Breast epithelium (tissue), 4 donors: ENCODE measurements at regions of chr1 and their contacts with region 1.

Region 1: DNA sequence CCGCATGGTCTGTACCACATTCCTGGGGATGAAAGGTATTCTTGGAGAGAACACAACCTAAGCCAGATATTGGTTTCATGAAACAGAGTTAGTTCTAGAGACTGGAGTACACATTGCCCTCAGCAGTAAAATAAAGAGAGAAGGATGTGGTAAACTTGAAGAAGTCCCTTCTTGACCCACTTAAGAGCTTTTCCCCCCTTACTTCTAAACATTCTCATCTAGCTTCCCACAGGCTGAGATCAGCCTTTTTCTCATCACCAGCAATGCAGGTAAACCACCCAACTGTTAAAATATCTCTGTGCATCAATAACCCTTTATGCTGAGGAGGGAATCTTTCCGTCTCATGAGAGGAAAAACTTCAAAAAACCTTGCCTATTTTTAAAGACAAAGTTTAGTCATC is 62.6 kb downstream of the SUSD4 start:
- DNase-seq: no peak
- H3K4me3 ChIP-seq: no peak overlapping the region
- H3K27ac ChIP-seq: no peak overlapping the region
- H3K4me1 ChIP-seq: no peaks in the 10 kb centered on the region
- H3K27me3 ChIP-seq: no peaks in the 10 kb centered on the region
- CTCF ChIP-seq: no peak
- POLR2A ChIP-seq: no peak

Region 2: DNA sequence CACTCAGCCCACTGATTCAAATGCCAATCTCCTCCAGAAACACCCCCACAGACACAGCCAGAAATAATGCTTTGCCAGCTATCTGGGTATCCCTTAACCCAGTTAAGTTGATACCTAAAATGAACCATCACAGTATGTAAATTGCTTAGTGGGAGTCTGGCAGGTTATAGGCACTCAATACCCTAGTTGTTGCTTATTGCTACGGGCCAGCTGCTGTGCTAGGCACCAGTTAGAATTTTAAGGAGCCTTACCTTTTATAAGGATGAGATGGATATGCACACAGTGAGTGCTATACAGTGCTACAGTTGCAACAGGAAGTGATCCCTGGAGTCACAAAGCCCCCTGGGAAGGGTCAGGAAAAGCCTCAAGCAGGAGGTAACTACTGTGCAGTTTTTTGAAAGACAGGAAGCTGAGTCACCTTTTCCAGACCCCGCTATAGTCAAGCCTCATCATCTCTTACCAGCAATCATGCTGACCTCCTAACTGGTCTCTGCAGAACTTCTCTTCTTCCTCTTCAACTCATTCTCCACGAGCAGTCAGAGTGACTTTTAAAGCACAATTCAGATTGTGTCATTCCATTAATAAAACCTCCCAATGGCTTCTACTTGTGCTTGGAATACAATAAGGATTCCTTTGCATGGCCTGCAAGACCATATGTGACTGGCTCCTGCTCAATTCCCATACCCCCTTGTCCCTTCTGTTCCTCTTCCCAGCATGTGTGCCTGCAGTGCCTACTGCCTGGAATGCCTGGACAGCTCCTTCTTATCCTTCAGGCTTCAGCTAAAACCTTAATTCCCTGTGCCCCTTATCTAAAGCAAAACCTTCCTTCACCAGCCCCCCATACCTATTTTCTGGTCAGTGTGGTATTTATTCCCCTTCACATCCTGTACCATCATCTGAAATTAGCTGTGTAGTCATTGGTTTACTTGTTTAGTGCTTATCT is 147.9 kb before region 1 on chr1:
- intact Hi-C with region 1: no loop called
- DNase-seq: no peak
- H3K4me3 ChIP-seq: no peak overlapping the region
- H3K27ac ChIP-seq: no peak overlapping the region
- H3K4me1 ChIP-seq: no peaks in the 10 kb centered on the region
- H3K27me3 ChIP-seq: no peaks in the 10 kb centered on the region
- CTCF ChIP-seq: no peak
- POLR2A ChIP-seq: no peak

Region 3: DNA sequence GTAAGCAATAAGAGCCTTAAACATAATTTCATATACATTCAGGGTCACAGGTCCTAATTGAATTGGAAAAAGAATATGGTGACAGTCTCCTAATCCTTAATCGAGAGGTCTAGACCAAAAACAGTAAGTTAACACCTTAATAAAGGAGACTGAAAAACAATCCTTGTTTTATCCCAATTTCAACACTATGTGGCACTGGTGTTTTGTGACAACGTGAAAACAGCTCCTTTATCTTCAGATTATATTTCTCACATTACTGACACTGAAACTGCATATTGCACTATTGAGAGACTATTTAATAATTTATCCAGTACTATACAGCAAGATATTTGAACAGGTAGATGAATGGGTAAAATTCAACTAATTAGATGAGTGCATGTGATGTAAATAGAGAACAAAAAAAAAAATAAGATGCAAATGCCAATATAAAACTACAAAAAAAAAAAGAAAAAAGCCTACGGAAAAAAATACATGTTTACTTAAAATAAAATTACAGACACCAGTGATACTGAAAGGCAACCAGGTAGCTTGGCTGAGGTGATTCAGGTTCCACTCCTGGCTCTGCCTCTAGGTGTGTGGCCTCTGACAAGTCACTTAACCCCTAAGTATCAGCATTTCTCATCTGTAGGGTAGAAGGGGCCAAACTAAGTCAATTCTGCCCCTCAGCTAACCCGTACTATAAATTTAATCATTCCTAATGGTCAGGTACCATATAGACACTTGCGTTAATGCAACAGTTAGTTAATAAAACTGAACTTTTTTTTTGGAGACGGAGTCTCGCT is 510.5 kb after region 1 on chr1:
- intact Hi-C with region 1: loop called (anchors 5 kb)
- DNase-seq: no peak
- H3K4me3 ChIP-seq: no peak overlapping the region
- H3K27ac ChIP-seq: no peak overlapping the region
- H3K4me1 ChIP-seq: no peaks in the 10 kb centered on the region
- H3K27me3 ChIP-seq: no peaks in the 10 kb centered on the region
- CTCF ChIP-seq: peak in 2 of 3 donors; percentile 32 to 42
- POLR2A ChIP-seq: no peak